ENCODE measurements at regions of chr10 and their contacts with region 1.

Region 1: DNA sequence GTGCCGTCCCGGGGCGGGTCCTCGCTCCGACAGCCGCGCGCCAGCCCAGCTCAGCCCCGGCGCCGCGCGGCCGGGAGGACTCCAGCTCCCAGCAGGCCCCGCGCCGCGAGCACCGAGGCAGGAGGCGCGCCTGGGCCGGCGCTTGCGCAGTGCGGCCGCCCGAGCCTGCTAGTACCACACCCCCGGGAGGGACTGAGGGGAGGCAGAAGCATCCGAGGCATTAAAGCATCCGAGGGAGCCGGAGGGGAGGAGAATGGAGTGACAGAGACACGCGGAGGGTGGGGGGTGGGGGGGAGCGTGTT is at the start of gene GRK5:
- DNase-seq: peak; percentile 89 to 99 (median 96)
- ATAC-seq: peak; percentile 82
- H3K4me3 ChIP-seq: peak within 1 kb of the TSS; percentile 68
- H3K4me3 Mint-ChIP-seq: peak within 1 kb of the TSS; percentile 99
- H3K27ac ChIP-seq: peak within 1 kb of the TSS; percentile 70 to 88
- H3K27ac Mint-ChIP-seq: peak within 1 kb of the TSS; percentile 89
- H3K4me1 ChIP-seq: peaks cover 40% of the 10 kb centered on the region
- H3K4me1 Mint-ChIP-seq: peaks cover 46% of the 10 kb centered on the region
- H3K27me3 ChIP-seq: no peaks in the 10 kb centered on the region
- H3K27me3 Mint-ChIP-seq: no peaks in the 10 kb centered on the region
- CTCF ChIP-seq: no peak
- total RNA-seq, gene GRK5: 19.2 to 20.8 TPM

Region 2: GRCh38 chr10:119189811-119190282 is 17.5 kb before region 1 on chr10:
- CTCF ChIA-PET with region 1: interaction called, 8 read pairs
- POLR2A ChIA-PET with region 1: interaction called, 11 read pairs
- intact Hi-C with region 1: no loop called
- DNase-seq: peak in 3 of 14 experiments; percentile 20 to 55 (median 33)
- ATAC-seq: no peak
- H3K4me3 ChIP-seq: no peak overlapping the region
- H3K4me3 Mint-ChIP-seq: no peak overlapping the region
- H3K27ac ChIP-seq: no peak overlapping the region
- H3K27ac Mint-ChIP-seq: no peak overlapping the region
- H3K4me1 ChIP-seq: peaks cover 8% of the 10 kb centered on the region
- H3K4me1 Mint-ChIP-seq: peaks cover 11% of the 10 kb centered on the region
- H3K27me3 ChIP-seq: no peaks in the 10 kb centered on the region
- H3K27me3 Mint-ChIP-seq: no peaks in the 10 kb centered on the region
- CTCF ChIP-seq: no peak

Region 3: DNA sequence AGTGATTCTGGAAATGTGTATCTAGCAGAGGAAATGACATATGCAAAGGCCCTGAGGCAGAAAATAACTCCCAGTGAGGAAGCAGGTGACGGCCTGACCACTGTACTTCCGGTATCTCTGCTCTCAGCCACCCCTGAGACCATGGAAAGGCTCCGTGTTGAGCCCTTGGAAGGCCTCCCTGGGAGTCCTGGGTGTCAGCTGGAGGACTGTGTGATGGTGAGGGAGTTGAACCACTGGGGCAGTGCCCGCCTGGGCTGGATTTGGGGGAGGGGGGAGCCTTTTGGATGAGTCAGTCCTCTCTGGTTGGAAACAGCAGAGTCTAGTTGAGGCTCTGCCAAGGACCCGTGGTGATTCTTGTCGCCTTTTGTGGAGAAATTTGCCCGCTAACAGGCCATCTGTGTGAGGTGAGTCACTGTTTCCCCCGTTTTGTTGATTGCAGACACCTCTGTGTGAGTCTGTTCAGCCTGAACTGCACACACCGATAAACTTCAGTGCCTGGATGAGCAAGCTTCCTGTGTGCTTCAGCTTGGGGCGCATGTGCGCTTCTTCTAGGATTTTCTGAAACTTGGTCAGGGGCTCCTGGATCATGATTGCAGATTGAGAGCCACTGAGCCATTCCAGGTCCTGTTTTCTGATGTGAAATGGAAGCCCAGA is 98.7 kb after region 1 on chr10:
- CTCF ChIA-PET with region 1: interaction called, 29 read pairs
- POLR2A ChIA-PET with region 1: interaction called, 63 read pairs
- intact Hi-C with region 1: loop called (anchors 2 kb)
- DNase-seq: peak; percentile 50 to 92 (median 82)
- ATAC-seq: peak; percentile 81
- H3K4me3 ChIP-seq: peak overlapping the region; percentile 57
- H3K4me3 Mint-ChIP-seq: peak overlapping the region; percentile 88
- H3K27ac ChIP-seq: peak overlapping the region; percentile 83 to 94
- H3K27ac Mint-ChIP-seq: peak overlapping the region; percentile 94
- H3K4me1 ChIP-seq: peaks cover 77% of the 10 kb centered on the region
- H3K4me1 Mint-ChIP-seq: peaks cover 75% of the 10 kb centered on the region
- H3K27me3 ChIP-seq: no peaks in the 10 kb centered on the region
- H3K27me3 Mint-ChIP-seq: no peaks in the 10 kb centered on the region
- CTCF ChIP-seq: no peak

Region 4: GRCh38 chr10:119494236-119495060 is 287.1 kb after region 1 on chr10:
- CTCF ChIA-PET with region 1: interaction called, 8 read pairs
- POLR2A ChIA-PET with region 1: interaction called, 8 read pairs
- intact Hi-C with region 1: loop called in 1 of 2 experiments (anchors 5 kb)
- DNase-seq: peak in 1 of 14 experiments; percentile 23
- ATAC-seq: no peak
- H3K4me3 ChIP-seq: no peak overlapping the region
- H3K4me3 Mint-ChIP-seq: peak overlapping the region; percentile 57
- H3K27ac ChIP-seq: peak overlapping the region; percentile 33 to 57
- H3K27ac Mint-ChIP-seq: peak overlapping the region; percentile 92
- H3K4me1 ChIP-seq: peaks cover 72% of the 10 kb centered on the region
- H3K4me1 Mint-ChIP-seq: peaks cover 80% of the 10 kb centered on the region
- H3K27me3 ChIP-seq: no peaks in the 10 kb centered on the region
- H3K27me3 Mint-ChIP-seq: no peaks in the 10 kb centered on the region
- CTCF ChIP-seq: no peak

Region 5: DNA sequence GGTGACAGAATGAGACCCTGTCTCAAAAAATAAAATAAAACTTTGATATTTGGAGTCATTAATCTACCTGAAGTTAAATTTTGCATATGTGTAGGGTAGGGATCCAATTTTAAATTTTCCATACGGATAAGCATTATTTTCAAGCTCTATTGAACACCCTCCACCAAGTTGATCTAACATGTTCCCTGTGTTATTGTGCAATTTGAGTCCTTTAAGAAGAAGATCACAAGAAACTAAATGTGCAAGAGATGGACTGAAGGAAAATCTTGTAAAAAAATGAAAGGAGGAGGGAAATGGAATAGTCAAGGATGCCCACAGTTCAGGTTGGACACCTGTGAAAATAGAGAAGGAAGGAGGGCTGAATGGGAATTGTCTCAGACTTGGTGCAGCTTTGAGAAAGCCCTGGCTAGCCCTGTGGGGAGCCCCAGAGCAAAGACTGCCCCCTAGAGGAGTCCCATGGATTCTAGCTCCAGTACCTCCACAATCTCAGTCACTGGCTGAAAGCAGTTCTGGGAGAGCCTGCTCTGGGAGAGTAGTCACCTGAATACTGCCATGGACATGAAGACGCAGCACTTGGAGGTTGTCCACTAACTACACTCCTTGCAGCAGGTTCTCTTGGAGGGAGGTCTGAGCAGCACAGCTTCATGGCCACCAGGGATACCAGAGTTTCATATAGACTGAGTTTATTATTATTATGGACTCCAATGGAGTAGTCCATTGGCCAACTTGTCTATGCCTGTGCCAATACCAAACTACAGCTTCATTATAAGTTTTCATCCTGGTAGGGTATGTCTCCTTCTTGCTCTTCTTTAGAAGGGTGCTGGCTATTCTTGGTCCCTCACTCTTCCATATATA is 395.1 kb after region 1 on chr10:
- CTCF ChIA-PET with region 1: interaction called, 3 read pairs
- POLR2A ChIA-PET with region 1: interaction called, 3 read pairs
- intact Hi-C with region 1: loop called (anchors 5 kb)
- DNase-seq: peak in 8 of 14 experiments; percentile 4 to 65 (median 29)
- ATAC-seq: peak; percentile 68
- H3K4me3 ChIP-seq: no peak overlapping the region
- H3K4me3 Mint-ChIP-seq: no peak overlapping the region
- H3K27ac ChIP-seq: no peak overlapping the region
- H3K27ac Mint-ChIP-seq: no peak overlapping the region
- H3K4me1 ChIP-seq: peaks cover 5% of the 10 kb centered on the region
- H3K4me1 Mint-ChIP-seq: peaks cover 21% of the 10 kb centered on the region
- H3K27me3 ChIP-seq: no peaks in the 10 kb centered on the region
- H3K27me3 Mint-ChIP-seq: no peaks in the 10 kb centered on the region
- CTCF ChIP-seq: peak; percentile 48

Measured in CD4-positive, alpha-beta T cell (primary cell).